A549 (cell line): ENCODE measurements at regions of chrX and their contacts with region 1.

Region 1: GRCh38 chrX:118807151-118808017 is 16.2 kb upstream of the ZCCHC12 start:
- DNase-seq: peak; percentile 26 to 67
- ATAC-seq: peak; percentile 86 to 88
- H3K4me3 ChIP-seq: no peak overlapping the region
- H3K27ac ChIP-seq: no peak overlapping the region
- H3K4me1 ChIP-seq: no peaks in the 10 kb centered on the region
- CTCF ChIP-seq: peak; percentile 79
- EP300 ChIP-seq: no peak
- POLR2A ChIP-seq: no peak
- RAD21 ChIP-seq: peak; percentile 88 to 94

Region 2: GRCh38 chrX:118627084-118627758 is 180.2 kb before region 1 on chrX:
- CTCF ChIA-PET with region 1: interaction called, 44 read pairs
- POLR2A ChIA-PET with region 1: no interaction called
- DNase-seq: peak; percentile 22 to 31
- ATAC-seq: peak; percentile 66 to 81; a peak in 5 of 6 replicates
- H3K4me3 ChIP-seq: no peak overlapping the region
- H3K27ac ChIP-seq: no peak overlapping the region
- H3K4me1 ChIP-seq: no peaks in the 10 kb centered on the region
- CTCF ChIP-seq: peak; percentile 62
- EP300 ChIP-seq: no peak
- POLR2A ChIP-seq: no peak
- RAD21 ChIP-seq: peak; percentile 54 to 71; a peak in 4 of 5 replicates

Region 3: DNA sequence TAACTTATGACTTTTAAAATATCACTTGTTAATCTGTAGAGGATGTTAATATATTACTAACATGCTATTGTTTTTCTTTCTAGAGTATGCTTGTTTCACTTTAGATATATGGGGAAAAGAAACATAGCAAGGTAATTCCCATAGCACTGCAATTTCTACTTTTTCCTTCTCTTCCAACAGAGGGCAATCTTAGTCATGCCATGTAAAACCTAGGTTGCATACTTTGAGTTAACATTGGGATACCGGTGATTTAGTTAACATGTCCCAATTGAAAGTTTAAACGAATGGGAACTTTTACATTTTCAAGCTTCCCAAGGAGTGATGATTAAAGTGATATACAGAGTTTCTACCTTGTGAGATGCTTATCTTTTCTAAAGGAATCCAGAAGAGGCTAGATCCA is 169.4 kb before region 1 on chrX:
- CTCF ChIA-PET with region 1: interaction called, 82 read pairs
- POLR2A ChIA-PET with region 1: no interaction called
- DNase-seq: peak in 1 of 2 experiments; percentile 11
- ATAC-seq: peak in 1 of 2 experiments; percentile 69; a peak in 3 of 6 replicates
- H3K4me3 ChIP-seq: no peak overlapping the region
- H3K27ac ChIP-seq: no peak overlapping the region
- H3K4me1 ChIP-seq: no peaks in the 10 kb centered on the region
- CTCF ChIP-seq: peak; percentile 49
- EP300 ChIP-seq: no peak
- POLR2A ChIP-seq: no peak
- RAD21 ChIP-seq: peak; percentile 55 to 70

Region 4: DNA sequence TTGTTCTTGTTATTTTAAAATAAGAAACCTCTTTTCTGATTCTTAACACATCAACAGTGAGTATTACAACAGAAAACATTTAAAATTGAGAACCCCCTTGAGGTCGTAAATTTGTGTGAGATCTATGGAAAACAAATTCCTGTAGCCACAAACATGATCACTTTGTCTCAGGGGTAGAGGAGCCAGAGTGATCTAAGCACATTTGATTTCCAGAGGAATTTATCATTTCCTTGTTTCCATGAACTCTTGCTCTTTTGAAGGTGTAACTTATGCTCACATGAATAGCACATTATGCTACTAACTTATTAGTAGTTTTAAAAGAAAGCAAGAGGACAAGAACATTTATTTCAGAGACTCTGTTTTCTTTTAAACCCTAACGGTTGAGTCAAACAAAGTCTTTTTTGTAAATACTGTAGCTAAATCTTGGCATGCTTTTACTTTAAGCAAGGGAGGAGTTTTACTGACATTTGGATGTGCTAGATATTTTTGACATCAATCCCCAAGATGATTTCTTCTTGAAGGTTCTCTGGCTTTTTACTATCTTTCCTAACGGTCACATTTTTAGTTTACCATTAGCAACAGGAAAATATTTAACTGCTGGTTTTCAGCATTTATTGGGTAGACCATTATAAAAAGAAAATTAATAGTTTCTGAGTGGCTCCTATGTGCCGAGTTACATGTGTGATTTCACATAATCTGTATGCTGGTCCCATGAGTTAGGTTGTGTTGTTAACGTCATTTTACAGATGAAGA is 11.7 kb before region 1 on chrX:
- CTCF ChIA-PET with region 1: interaction called, 17 read pairs
- POLR2A ChIA-PET with region 1: no interaction called
- DNase-seq: no peak
- ATAC-seq: no peak
- H3K4me3 ChIP-seq: no peak overlapping the region
- H3K27ac ChIP-seq: no peak overlapping the region
- H3K4me1 ChIP-seq: no peaks in the 10 kb centered on the region
- CTCF ChIP-seq: no peak
- EP300 ChIP-seq: no peak
- POLR2A ChIP-seq: no peak
- RAD21 ChIP-seq: no peak

Region 5: DNA sequence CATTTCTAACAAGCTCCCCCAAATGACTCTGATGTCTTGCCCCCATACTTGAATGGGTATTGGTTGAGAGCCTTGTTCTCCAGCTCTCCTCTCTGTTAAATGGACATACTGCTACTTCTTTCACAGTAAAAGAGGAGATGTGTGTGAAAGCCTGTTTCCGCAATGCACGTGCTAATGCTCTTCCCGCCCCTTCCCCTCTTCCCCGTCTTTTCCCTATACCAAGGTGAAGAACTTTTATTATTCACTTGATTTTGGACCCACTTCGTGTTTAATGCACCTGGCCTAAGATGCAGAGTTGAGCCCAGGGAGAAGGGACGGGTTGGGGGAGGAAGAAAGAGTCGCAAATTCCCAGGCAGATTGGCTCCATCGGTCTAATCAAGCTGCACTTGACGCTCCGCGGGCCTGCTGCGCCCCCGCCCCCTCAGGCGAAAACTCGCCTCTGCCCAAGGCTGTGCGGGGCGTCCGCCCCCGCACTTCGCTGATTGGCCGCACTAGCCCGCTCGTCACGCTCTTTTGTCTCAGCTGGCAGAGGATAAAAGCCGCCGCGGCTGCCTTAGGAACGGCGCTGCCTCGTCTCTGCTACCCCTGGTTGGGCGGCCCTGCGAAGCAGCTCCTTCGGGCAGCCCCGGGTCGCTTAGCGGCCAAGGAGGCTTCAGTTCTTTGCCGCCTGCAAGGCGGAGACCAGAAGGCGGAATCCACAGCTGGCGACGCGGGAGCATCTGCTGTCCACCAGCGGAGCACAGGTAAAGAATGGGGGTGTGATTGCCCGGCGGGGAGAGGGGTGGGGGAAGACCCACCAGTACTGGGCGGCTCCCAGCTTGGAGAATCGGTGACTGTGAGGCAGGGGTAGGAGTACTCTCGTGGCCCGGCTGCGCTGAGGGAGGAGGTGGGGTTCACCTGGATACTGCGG is 16.1 kb after region 1 on chrX and contains the start of gene ZCCHC12:
- CTCF ChIA-PET with region 1: interaction called, 18 read pairs
- POLR2A ChIA-PET with region 1: no interaction called
- DNase-seq: peak; percentile 26 to 48
- ATAC-seq: peak; percentile 69 to 90
- H3K4me3 ChIP-seq: peak within 1 kb of the TSS; percentile 39
- H3K27ac ChIP-seq: peak within 1 kb of the TSS in 1 of 2 experiments; percentile 66; a peak in 3 of 6 replicates
- H3K4me1 ChIP-seq: no peaks in the 10 kb centered on the region
- CTCF ChIP-seq: no peak
- EP300 ChIP-seq: no peak
- POLR2A ChIP-seq: no peak
- RAD21 ChIP-seq: no peak
- polyA plus RNA-seq, gene ZCCHC12: 0.11 and 0.13 TPM in 2 replicates

Region 6: DNA sequence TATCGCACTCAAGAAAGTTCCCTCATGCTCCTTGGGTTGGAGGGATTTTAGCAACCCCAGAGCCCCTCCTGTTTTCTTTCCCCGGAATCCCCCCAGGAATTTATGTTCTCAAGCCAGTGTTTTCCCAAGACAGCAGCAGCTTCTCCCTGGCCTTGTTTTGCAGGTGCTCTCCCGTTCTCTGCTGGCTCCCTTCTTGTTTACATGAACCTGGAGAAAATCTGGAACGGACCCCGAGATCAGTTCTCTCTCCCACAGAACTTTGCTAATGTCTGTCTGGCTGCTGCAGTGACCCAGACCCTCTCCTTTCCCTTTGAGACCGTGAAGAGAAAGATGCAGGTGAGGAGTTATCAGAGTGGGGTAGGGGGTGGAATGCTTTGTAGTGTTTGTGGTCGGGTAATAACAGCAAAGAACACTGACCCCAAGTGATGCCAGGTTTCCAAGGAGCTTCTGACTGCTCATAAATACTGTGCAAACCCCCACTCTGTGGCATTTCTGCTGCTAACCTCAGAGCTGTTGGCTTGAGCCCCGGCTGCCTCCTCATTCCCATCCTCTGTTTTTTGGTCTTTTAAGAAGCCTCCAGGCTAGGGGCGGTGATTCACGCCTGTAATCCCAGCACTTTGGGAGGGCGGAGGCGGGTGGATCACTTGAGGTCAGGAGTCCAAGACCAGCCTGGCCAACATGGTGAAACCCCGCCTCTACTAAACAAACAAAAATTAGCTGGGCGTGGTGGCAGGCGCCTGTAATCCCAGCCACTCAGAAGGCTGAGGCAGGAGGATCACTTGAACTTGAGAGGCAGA is 602.8 kb after region 1 on chrX:
- CTCF ChIA-PET with region 1: no interaction called
- POLR2A ChIA-PET with region 1: no interaction called
- DNase-seq: peak; percentile 46 to 90
- ATAC-seq: peak; percentile 92 to 97
- H3K4me3 ChIP-seq: no peak overlapping the region
- H3K27ac ChIP-seq: peak overlapping the region; percentile 94 to 96
- H3K4me1 ChIP-seq: peaks cover 51% of the 10 kb centered on the region
- CTCF ChIP-seq: no peak
- EP300 ChIP-seq: no peak
- POLR2A ChIP-seq: no peak
- RAD21 ChIP-seq: no peak; a peak in 1 of 5 replicates